Activated CD8-positive, alpha-beta memory T cell treated with anti-CD3 and anti-CD28 coated beads, Interleukin-2, amount 10 ng/mL, durations not matched to agents 7 days and 5 days (primary cell): ENCODE measurements at regions of chr16 and their contacts with region 1.

Region 1: DNA sequence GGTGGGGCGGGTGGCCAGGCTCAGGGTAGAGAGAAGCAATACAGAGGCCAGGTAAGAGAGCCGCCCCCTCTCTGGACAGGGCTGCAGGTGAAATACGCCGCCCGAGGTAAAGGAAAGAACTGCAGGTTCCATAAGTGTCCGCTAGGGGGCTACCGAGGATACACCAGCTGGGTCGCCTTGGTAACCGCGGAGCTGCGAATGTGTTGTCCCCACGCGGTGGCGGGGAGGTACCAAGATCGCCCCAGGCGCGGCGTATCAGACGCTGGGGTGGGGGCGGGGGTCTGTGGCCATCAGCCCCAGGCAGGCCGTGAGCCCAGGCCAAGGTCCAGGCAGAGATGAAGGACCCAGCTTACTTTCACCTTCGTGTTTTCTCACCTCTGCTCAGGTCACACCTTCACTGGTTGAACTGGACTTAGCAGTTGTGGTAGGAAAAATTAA is 18.4 kb upstream of the ZFP90 start:
- DNase-seq: peak; percentile 92
- ATAC-seq: peak; percentile 94
- H3K4me3 Mint-ChIP-seq: peak overlapping the region; percentile 32
- H3K27ac Mint-ChIP-seq: no peak overlapping the region
- H3K4me1 Mint-ChIP-seq: peaks cover 9% of the 10 kb centered on the region
- H3K27me3 Mint-ChIP-seq: peaks cover 2% of the 10 kb centered on the region

Region 2: DNA sequence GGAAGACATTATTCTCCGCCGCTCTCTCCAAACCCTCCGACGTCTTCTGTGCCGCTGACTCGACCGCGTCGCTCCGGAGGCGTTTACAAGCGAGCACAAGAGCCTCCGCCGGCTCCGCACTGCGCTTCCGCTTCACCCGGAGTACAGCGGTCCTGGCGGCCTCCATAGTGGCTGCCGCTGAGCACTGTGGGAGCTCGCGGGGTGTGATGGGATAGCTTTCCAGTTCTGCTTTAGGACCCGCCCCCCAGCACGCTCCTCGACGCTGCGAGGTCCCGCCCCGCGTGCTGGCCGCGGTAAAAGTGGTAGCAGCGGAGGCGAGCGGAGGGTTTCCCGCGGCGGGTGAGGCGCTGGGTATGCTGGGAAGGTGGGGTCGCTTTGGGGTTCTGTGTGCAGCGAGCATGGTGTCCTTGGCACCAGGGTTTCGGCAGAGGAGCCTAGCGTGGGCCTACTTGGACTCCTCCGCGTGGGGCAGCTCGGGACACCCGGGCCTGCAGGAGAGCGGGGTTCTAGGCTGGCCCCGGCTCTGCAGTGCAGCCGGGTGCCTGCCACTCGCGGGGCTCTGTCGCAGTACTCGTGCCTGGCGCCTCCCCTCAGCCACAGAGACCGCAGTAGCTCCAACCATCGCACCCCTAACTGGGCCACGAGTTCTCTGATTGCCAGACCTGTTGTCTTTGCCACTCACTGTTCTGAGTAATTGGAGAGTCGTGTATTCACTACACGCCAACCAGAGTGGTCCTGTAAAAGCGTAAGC is 209.7 kb before region 1 on chr16 and contains the starts of genes PRMT7 and SLC7A6OS:
- CTCF ChIA-PET with region 1: no interaction called
- DNase-seq: peak; percentile 96
- ATAC-seq: peak; percentile 99
- H3K4me3 Mint-ChIP-seq: peak within 1 kb of the TSS; percentile 85
- H3K27ac Mint-ChIP-seq: peak within 1 kb of the TSS; percentile 85
- H3K4me1 Mint-ChIP-seq: peaks cover 52% of the 10 kb centered on the region
- H3K27me3 Mint-ChIP-seq: no peaks in the 10 kb centered on the region
- total RNA-seq, gene PRMT7: 60.9 to 73.9 TPM
- total RNA-seq, gene SLC7A6OS: 29.8 to 30.8 TPM

Region 3: DNA sequence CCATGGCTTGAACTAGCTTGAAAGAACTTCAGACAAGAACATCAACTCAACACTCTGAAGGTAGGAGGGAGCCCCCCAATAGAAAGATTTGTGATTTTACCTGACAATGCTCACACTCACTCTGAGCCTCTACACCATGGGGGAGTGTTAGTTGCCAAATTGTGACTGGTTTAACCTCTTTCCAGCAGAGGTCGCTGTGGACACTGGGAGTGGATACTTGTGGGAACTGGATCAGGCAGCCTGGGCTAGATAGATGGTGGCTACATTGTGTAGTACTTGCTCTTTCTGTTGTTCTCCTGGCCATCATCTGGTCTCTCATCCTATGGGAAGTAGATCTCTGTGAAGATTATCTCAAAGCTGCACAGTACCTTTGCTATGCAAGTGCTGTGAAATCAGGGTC is 75.2 kb before region 1 on chr16:
- CTCF ChIA-PET with region 1: interaction called, 17 read pairs
- DNase-seq: peak; percentile 75
- ATAC-seq: no peak
- H3K4me3 Mint-ChIP-seq: no peak overlapping the region
- H3K27ac Mint-ChIP-seq: no peak overlapping the region
- H3K4me1 Mint-ChIP-seq: peaks cover 17% of the 10 kb centered on the region
- H3K27me3 Mint-ChIP-seq: peaks cover 55% of the 10 kb centered on the region

Region 4: DNA sequence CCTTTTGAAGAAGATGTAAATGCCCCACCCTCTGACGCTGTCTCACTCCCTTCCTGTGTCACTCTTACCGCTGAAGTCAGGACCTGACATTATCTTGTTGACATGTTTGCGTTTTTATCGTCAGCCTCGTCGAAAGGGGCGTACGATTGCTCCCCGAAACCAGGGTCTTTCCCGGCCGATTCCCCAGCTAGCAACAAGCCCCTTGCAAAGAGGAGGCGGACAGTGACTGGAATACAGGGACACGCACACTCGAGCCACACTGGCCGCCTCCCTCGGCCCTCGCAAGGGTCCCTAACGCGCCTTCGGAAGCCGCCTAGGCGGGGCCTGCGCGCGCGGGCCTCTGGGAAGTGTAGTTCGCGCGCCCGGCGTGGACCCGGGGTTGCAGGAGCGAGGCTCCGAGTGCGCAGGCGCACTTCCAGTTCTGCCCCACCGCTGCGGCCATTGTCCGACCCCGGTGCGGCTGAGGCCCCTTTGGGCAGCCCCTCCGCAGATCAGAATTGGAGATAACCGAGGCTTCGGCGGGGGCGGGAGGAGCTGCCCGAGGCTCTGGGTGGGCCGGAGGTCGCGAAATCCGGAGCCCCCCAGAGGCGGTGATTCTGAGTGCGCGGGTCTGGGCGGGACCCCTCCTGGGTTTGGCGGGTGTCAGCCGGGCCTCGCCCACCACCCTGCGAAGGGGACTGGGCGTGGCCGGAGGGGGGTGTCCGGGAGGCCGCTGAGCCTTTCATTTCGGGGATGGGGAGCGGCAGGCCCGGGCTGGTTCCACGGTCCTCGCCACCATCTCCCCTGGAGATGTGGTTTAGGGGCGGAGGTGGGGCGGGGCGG is 18.4 kb after region 1 on chr16 and contains the start of gene ZFP90:
- CTCF ChIA-PET with region 1: interaction called, 15 read pairs
- DNase-seq: peak; percentile 91
- ATAC-seq: peak; percentile 97
- H3K4me3 Mint-ChIP-seq: peak within 1 kb of the TSS; percentile 100
- H3K27ac Mint-ChIP-seq: peak within 1 kb of the TSS; percentile 99
- H3K4me1 Mint-ChIP-seq: peaks cover 16% of the 10 kb centered on the region
- H3K27me3 Mint-ChIP-seq: no peaks in the 10 kb centered on the region
- total RNA-seq, gene ZFP90: 28.8 to 32.1 TPM